ENCODE measurements at regions of chr3 and their contacts with region 1.

Region 1: GRCh38 chr3:50227390-50228183 is 8.4 kb upstream of the GNAI2 start:
- DNase-seq: peak; percentile 61
- ATAC-seq: peak; percentile 91
- H3K4me3 ChIP-seq: peak overlapping the region; percentile 85
- H3K27ac ChIP-seq: peak overlapping the region; percentile 82
- H3K4me1 ChIP-seq: peaks cover 19% of the 10 kb centered on the region
- H3K27me3 ChIP-seq: no peaks in the 10 kb centered on the region
- CTCF ChIP-seq: peak; percentile 69 to 93 (median 82)
- EP300 ChIP-seq: no peak
- POLR2A ChIP-seq: peak; percentile 75
- RAD21 ChIP-seq: peak; percentile 88

Region 2: DNA sequence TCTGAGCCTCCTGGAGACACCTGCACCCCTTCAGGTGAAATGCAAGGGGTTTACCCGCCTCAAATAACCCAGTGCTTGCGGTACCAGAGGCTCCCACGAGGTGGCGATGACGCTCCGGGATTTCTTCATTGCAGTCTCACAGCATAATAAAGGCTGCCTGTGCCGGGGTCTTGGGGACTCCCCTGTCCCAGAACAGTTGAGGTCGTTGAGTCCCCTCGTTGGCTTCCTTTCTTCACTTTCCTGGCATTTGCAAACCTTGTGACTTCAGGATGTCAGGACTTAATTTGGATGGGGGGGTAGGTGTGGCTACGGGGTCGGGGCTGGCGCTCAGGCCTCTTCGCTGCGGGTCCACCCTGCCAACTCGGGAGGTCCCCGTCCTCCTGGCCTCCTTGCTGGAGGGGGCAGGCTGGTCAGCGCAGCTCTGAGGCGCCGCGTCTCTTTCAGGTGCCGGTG is 34.9 kb before region 1 on chr3:
- CTCF ChIA-PET with region 1: interaction called, 110 read pairs
- POLR2A ChIA-PET with region 1: no interaction called
- RAD21 ChIA-PET with region 1: interaction called, 72 read pairs
- SMC1A ChIA-PET with region 1: interaction called, 24 read pairs
- in situ Hi-C with region 1: loop called (anchors 5 kb)
- intact Hi-C with region 1: loop called (anchors 1 kb)
- DNase-seq: peak; percentile 16
- ATAC-seq: peak; percentile 79
- H3K4me3 ChIP-seq: no peak overlapping the region
- H3K27ac ChIP-seq: no peak overlapping the region
- H3K4me1 ChIP-seq: no peaks in the 10 kb centered on the region
- H3K27me3 ChIP-seq: no peaks in the 10 kb centered on the region; a peak in 2 of 4 replicates
- CTCF ChIP-seq: peak; percentile 93 to 97 (median 96); a peak in 5 of 6 replicates
- EP300 ChIP-seq: no peak
- POLR2A ChIP-seq: no peak
- RAD21 ChIP-seq: peak; percentile 94

Region 3: DNA sequence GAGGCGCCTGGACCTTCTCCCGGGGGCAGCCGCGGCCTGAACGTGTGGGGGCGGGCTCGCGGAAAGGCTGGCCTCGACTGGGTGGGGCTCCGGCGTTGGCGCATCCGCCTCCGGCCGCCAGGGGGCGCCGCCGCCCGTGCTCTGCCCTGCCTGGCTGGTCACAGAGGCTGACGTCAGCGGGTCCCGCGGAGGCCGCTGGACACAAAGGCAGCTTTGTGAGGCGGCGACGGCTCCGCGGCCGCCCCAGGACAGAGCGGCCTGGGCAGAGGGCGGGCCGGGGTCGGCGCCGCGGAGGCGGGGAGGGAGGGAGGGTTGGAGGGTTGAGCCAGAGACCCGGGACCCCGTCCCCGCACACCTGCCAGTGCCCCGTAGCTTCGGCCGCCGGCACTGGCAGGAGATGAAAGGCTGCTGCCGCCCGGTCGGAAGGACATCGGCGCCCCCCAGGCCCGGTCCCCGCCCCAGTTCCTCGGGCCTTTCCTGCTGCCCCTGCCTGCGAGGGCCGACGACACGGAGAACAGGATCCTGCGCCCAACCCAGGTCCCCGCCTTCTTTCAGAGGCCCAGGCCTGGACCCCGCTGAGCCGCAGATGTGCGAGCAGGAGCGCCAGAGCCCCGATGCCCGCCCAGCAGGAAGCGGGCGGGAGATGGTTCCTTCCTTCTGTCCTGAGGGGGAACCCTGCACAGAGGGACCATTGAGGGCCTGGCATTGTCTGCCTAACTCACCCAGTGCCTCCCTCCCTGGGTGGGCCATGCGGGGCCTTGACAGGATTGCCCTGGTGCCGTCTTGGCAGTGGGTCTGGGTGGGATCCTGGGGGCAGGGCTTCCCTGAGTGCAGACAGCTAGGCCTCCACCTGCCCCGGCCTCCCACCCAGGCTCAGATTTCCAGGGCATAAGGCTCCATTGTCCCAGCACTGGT is 32.7 kb after region 1 on chr3:
- CTCF ChIA-PET with region 1: interaction called, 44 read pairs
- POLR2A ChIA-PET with region 1: no interaction called
- RAD21 ChIA-PET with region 1: interaction called, 18 read pairs
- SMC1A ChIA-PET with region 1: interaction called, 3 read pairs
- in situ Hi-C with region 1: no loop called
- intact Hi-C with region 1: no loop called
- DNase-seq: no peak
- ATAC-seq: peak; percentile 98
- H3K4me3 ChIP-seq: peak overlapping the region; percentile 72; the same call in 1 of the 2 replicates
- H3K27ac ChIP-seq: no peak overlapping the region
- H3K4me1 ChIP-seq: peaks cover 14% of the 10 kb centered on the region
- H3K27me3 ChIP-seq: no peaks in the 10 kb centered on the region
- CTCF ChIP-seq: peak; percentile 91 to 98 (median 96)
- EP300 ChIP-seq: no peak
- POLR2A ChIP-seq: peak; percentile 75
- RAD21 ChIP-seq: peak; percentile 56; the same call in 1 of the 2 replicates

Region 4: GRCh38 chr3:50321336-50322114 is 93.9 kb after region 1 on chr3:
- CTCF ChIA-PET with region 1: interaction called, 3 read pairs
- POLR2A ChIA-PET with region 1: no interaction called
- RAD21 ChIA-PET with region 1: no interaction called
- SMC1A ChIA-PET with region 1: no interaction called
- in situ Hi-C with region 1: no loop called
- intact Hi-C with region 1: loop called (anchors 1 kb)
- DNase-seq: peak; percentile 42
- ATAC-seq: peak; percentile 91
- H3K4me3 ChIP-seq: peak overlapping the region; percentile 70
- H3K27ac ChIP-seq: peak overlapping the region; percentile 88
- H3K4me1 ChIP-seq: peaks cover 22% of the 10 kb centered on the region
- H3K27me3 ChIP-seq: no peaks in the 10 kb centered on the region
- CTCF ChIP-seq: peak; percentile 32 to 68 (median 35); a peak in 5 of 6 replicates
- EP300 ChIP-seq: no peak
- POLR2A ChIP-seq: peak; percentile 56; the same call in 1 of the 2 replicates
- RAD21 ChIP-seq: no peak

Measured in GM12878 (cell line).